Right ventricle myocardium inferior (tissue), 1 donor: ENCODE measurements at regions of chr19 and their contacts with region 1.

Region 1: DNA sequence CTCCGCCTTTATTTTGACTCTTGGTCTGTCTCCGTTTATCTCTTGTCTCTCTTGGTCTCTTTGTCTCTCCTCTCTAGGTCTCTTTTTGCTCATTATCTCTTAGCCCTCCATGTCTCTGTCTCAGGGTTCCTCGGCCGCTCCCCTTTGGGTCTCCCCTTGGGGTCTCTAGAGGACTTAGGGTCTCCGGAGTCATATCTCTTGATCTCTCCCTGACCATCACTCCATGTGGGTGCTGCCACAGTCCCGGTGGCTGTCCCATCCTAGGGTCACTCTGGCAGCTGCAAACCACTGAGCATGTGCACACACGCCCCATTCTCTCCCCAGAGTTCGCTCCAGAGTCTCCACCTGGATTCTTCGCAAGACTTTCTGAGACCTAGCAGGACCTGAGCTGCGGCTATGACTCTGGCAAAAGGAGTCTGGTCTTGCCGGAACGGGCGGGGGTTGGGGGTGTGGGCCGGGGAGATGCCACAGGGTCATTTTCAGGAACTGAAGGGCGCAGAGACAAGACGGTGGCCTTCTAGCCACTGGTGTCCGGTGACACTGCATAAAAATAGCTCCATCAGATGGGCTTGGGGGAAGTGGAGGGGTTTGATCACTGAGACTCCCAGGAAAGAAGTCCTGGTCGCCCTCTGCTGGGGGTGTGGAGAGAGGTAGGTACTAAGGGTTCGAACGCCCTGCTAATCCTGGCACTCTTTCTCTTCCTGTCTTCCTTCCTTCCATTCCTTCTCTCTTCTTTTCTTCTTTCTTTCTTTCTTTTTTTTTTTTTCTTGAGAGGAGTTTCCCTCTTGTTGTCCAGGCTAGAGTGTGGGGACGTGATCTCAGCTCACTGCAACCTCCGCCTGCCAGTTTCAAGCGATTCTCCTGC is 1.2 kb upstream of the KCNA7 start:
- DNase-seq: no peak
- ATAC-seq: peak; percentile 38

Region 2: DNA sequence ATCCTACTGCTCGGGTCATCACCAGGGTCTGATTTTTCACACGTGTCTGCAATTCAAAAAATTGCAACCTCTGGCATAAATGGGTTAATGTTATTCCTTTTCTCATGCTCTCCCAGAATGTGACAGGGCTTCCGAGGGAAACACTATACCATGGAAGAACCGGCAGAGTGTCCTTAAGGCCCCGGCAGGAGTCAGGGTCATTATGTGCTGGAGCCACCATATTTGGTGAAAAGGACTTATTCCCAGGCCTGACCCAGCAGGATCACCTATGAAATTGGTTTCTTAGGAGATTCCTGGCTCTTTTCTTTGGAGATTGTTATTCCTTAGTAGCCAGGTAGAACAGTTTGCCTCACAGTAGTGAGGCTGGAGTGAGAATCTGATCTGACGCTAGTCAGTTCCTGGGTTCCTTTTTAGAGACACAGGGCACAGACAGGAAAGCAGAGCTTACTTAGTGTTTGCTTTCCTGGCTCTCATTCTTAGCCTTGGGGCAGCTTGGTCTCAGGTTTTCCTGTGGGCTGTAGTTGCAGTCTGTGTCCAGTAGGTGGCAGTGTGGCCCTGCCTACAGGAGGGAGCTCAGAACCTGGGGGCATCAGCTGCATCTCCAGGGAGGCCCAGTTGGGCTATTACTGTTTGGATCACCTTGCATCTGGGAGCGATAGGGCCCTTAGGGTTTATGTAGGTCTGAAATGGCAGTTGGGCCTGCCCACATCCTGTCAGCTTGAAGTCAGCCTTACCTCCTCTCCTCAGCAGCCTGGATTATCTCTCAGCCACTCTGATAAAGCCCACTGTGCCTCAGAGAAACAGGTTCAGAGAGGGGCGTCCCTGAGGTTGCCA is 23.9 kb after region 1 on chr19:
- intact Hi-C with region 1: no loop called
- DNase-seq: no peak
- ATAC-seq: peak; percentile 65

Region 3: GRCh38 chr19:49205114-49205513 is 131.4 kb after region 1 on chr19:
- intact Hi-C with region 1: loop called (anchors 5 kb)
- DNase-seq: no peak
- ATAC-seq: no peak

Region 4: GRCh38 chr19:49497047-49497788 is 423.5 kb after region 1 on chr19:
- intact Hi-C with region 1: no loop called
- DNase-seq: peak; percentile 89
- ATAC-seq: no peak